ENCODE measurements at regions of chrX and their contacts with region 1.

Region 1: DNA sequence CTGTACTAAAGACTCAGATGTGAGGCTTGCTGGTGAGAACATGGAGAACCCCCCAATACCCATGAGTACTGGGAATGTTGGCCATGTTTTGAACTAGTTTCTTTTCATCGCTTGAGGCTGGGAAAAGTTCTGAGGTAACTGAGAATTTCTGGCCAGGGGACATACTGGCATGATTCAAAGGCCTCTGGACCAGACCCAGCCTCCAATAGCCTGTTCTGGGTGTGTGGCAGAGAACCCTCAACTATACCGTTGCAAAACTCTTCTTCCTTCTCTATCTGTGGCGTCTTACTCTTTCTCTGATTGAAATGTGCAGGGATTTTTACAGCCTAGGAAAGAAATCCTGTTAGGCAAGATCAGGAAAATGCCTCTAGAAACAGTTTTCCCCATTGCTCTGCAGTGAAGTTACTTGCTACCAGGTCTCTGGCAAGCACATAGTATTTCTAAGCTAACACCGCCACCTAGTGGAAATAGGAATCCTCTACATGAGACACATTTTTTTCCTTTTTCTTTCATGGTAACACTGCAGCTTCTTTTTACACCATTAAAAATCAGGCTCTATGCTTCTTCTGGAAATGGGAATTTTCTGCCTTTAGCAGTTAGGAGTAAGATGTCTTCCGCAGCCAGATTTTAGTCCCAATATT is 170.7 kb upstream of the ZCCHC13 start:
- DNase-seq: peak; percentile 73
- H3K4me3 Mint-ChIP-seq: no peak overlapping the region
- H3K27ac Mint-ChIP-seq: no peak overlapping the region
- H3K4me1 Mint-ChIP-seq: no peaks in the 10 kb centered on the region
- H3K27me3 Mint-ChIP-seq: no peaks in the 10 kb centered on the region

Region 2: DNA sequence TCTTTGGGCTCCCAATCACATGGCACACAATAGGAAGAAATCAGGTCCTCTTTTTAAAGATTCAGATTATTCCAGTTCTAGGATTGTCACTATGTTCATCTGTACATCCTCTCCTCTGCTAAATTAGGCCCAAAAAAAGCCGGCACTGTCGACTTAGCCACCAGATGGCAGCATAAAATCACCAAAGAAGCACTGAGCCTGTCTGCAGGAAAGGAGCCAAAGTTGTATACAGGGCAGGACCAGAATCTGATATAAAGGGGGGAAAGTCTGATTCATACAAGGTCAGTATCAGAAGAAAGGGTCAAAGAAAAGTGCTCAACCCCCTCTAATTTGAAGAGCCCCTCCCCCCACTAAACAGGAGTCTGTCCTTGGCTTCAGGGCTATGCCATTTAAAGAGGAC is 277.7 kb before region 1 on chrX:
- intact Hi-C with region 1: loop called (anchors 1 kb)
- DNase-seq: peak; percentile 86
- H3K4me3 Mint-ChIP-seq: no peak overlapping the region
- H3K27ac Mint-ChIP-seq: no peak overlapping the region
- H3K4me1 Mint-ChIP-seq: no peaks in the 10 kb centered on the region
- H3K27me3 Mint-ChIP-seq: no peaks in the 10 kb centered on the region

Region 3: GRCh38 chrX:74251006-74251930 is 118.0 kb after region 1 on chrX:
- intact Hi-C with region 1: no loop called
- DNase-seq: no peak
- H3K4me3 Mint-ChIP-seq: no peak overlapping the region
- H3K27ac Mint-ChIP-seq: no peak overlapping the region
- H3K4me1 Mint-ChIP-seq: peaks cover 2% of the 10 kb centered on the region
- H3K27me3 Mint-ChIP-seq: no peaks in the 10 kb centered on the region

Region 4: GRCh38 chrX:74343343-74344279 is 210.3 kb after region 1 on chrX:
- intact Hi-C with region 1: loop called (anchors 10 kb)
- DNase-seq: peak; percentile 83
- H3K4me3 Mint-ChIP-seq: no peak overlapping the region
- H3K27ac Mint-ChIP-seq: no peak overlapping the region
- H3K4me1 Mint-ChIP-seq: peaks cover 6% of the 10 kb centered on the region
- H3K27me3 Mint-ChIP-seq: peaks cover 5% of the 10 kb centered on the region